Mammary epithelial cell (primary cell): ENCODE measurements at regions of chr18 and their contacts with region 1.

Region 1: GRCh38 chr18:11654736-11655605 is 34.1 kb upstream of the GNAL start:
- DNase-seq: peak; percentile 54
- H3K4me3 ChIP-seq: no peak overlapping the region
- H3K27ac ChIP-seq: no peak overlapping the region
- H3K4me1 ChIP-seq: peaks cover 31% of the 10 kb centered on the region
- H3K27me3 ChIP-seq: no peaks in the 10 kb centered on the region
- CTCF ChIP-seq: peak; percentile 94 to 95

Region 2: GRCh38 chr18:11607906-11608305 is 47.1 kb before region 1 on chr18:
- CTCF ChIA-PET with region 1: no interaction called
- dilution Hi-C with region 1: no loop called
- in situ Hi-C with region 1: no loop called
- intact Hi-C with region 1: loop called (anchors 5 kb)
- DNase-seq: no peak
- H3K4me3 ChIP-seq: no peak overlapping the region
- H3K27ac ChIP-seq: no peak overlapping the region
- H3K4me1 ChIP-seq: no peaks in the 10 kb centered on the region
- H3K27me3 ChIP-seq: no peaks in the 10 kb centered on the region
- CTCF ChIP-seq: no peak

Region 3: DNA sequence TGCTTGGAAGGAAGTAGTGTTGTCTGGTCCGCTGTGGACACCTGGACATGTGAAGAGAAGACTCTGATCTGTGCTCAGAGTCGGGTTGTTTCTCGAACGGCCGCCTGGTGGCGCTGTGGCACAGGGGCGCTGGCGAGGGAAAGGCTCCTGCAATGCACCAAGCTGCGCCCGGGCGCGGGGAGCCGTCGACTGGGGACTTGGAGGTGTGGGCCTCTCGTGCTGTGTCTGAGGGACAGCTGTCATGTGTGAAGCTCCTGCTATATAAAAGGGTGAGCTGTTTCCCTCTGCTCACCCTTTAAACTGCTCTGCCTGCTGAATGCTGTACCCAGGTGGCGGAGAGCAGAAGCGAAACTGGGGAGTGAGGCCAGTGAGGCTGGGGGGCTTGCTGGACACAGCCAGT is 78.1 kb after region 1 on chr18:
- CTCF ChIA-PET with region 1: interaction called, 43 read pairs
- dilution Hi-C with region 1: no loop called
- in situ Hi-C with region 1: loop called (anchors 5 kb)
- intact Hi-C with region 1: loop called (anchors 1 kb)
- DNase-seq: peak; percentile 63
- H3K4me3 ChIP-seq: peak overlapping the region in 1 of 3 experiments; percentile 16
- H3K27ac ChIP-seq: no peak overlapping the region
- H3K4me1 ChIP-seq: peaks cover 12% of the 10 kb centered on the region
- H3K27me3 ChIP-seq: no peaks in the 10 kb centered on the region
- CTCF ChIP-seq: peak; percentile 87 to 96

Region 4: GRCh38 chr18:11872479-11873136 is 217.6 kb after region 1 on chr18:
- CTCF ChIA-PET with region 1: interaction called, 3 read pairs
- dilution Hi-C with region 1: no loop called
- in situ Hi-C with region 1: loop called in 1 of 2 experiments (anchors 25 kb)
- intact Hi-C with region 1: loop called (anchors 1 kb)
- DNase-seq: no peak
- H3K4me3 ChIP-seq: no peak overlapping the region
- H3K27ac ChIP-seq: no peak overlapping the region
- H3K4me1 ChIP-seq: no peaks in the 10 kb centered on the region
- H3K27me3 ChIP-seq: no peaks in the 10 kb centered on the region
- CTCF ChIP-seq: peak; percentile 14 to 58

Region 5: GRCh38 chr18:11937874-11938478 is 283.0 kb after region 1 on chr18:
- CTCF ChIA-PET with region 1: no interaction called
- dilution Hi-C with region 1: no loop called
- in situ Hi-C with region 1: no loop called
- intact Hi-C with region 1: loop called (anchors 10 kb)
- DNase-seq: peak; percentile 47
- H3K4me3 ChIP-seq: no peak overlapping the region
- H3K27ac ChIP-seq: no peak overlapping the region
- H3K4me1 ChIP-seq: no peaks in the 10 kb centered on the region
- H3K27me3 ChIP-seq: no peaks in the 10 kb centered on the region
- CTCF ChIP-seq: peak; percentile 70 to 83

Region 6: DNA sequence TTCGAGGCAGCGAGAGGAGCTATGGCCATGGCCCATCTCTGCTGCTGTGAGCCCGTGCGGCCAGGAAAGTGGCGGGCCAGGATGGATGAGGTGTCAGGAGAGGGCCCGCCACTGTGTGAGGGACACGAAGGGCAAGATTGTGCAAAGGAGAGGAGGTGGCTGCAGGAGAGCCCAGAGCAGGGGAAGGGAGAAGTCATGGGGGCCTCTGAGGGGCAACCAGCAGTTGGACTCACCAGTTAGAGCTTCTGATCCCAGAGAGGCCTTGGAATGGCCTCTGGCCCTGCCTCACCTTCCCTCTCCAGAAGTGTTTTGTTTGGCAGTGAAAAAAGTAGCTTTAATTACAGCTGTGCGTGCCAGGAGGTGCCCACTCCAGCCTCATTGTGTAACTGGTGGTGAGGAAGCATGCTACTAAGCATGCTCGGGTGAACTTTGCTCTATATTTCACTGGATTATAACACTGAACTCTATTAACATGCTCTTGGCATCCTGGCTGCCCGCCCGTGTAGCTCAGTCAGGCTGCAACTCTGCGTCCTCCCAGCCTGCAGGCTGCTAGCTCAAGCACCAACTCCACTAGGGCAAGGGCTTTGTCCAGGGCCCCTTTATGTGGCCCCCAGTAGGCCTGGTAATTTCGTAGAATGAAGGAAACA is 360.6 kb after region 1 on chr18:
- CTCF ChIA-PET with region 1: no interaction called
- dilution Hi-C with region 1: no loop called
- in situ Hi-C with region 1: loop called in 1 of 2 experiments (anchors 25 kb)
- intact Hi-C with region 1: no loop called
- DNase-seq: peak; percentile 80
- H3K4me3 ChIP-seq: no peak overlapping the region
- H3K27ac ChIP-seq: no peak overlapping the region
- H3K4me1 ChIP-seq: peaks cover 21% of the 10 kb centered on the region
- H3K27me3 ChIP-seq: no peaks in the 10 kb centered on the region
- CTCF ChIP-seq: no peak